HAP-1 (cell line): ENCODE measurements at regions of chr6 and their contacts with region 1.

Region 1: DNA sequence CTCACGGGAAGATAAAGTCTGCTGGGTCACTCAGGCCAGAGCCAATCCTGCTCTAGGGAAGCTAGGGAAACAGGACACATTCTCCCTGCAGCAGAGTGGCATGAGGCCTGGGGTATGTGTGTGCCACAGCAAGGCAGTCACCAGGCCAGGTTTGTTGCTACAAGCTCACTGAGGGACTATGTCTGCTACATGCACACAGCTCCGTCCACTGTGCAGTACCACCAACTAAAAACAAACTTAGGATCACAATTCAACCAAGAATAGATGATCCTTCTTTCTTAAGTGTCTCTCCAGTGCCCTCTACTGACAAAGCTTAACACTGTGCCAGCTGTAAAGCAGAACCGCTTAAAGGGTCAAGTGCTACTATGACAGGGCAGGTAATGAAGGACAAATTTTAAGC is 192.5 kb downstream of the PTPRK start:
- DNase-seq: peak; percentile 14 to 19
- H3K4me3 ChIP-seq: no peak overlapping the region
- H3K4me1 ChIP-seq: no peaks in the 10 kb centered on the region
- H3K27me3 ChIP-seq: no peaks in the 10 kb centered on the region

Region 2: DNA sequence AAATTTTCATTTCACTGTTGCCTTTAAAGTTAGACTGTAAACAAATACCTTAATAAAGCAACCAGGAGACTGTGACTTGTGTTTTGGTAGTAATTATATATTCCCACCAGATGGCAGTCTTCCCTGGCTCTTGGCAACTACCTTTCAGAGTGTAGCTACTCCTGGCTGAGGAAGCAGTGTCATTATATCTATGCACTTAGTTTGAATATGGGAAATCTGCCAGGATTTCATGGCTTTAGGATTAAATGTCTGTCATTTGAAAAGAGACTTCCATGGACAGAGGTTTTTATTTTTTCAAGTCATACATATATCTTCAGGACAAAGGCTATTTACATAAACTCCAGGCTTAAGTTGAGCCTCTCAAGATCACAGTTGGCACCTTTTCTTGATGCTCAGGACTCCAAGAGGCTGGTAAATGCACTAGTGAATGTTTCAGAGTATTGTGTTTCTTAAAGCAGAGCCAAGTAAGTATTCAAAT is 590.8 kb before region 1 on chr6:
- in situ Hi-C with region 1: loop called (anchors 25 kb)
- DNase-seq: peak; percentile 64 to 85
- H3K4me3 ChIP-seq: no peak overlapping the region
- H3K4me1 ChIP-seq: peaks cover 4% of the 10 kb centered on the region
- H3K27me3 ChIP-seq: 0 out of 2 replicates have a peak, but pooled peaks cover 2% of the 10 kb centered on the region

Region 3: GRCh38 chr6:129050086-129050485 is 722.2 kb after region 1 on chr6:
- in situ Hi-C with region 1: no loop called
- DNase-seq: no peak
- H3K4me3 ChIP-seq: no peak overlapping the region
- H3K4me1 ChIP-seq: no peaks in the 10 kb centered on the region
- H3K27me3 ChIP-seq: no peaks in the 10 kb centered on the region